ENCODE measurements at regions of chr15 and their contacts with region 1.

Region 1: GRCh38 chr15:63402498-63403253 is 21.0 kb upstream of the CA12 start:
- DNase-seq: no peak
- H3K4me3 ChIP-seq: no peak overlapping the region
- H3K27ac ChIP-seq: no peak overlapping the region
- H3K4me1 ChIP-seq: peaks cover 0 to 5% (median 0%) of the 10 kb centered on the region in 4 donors
- H3K27me3 ChIP-seq: no peaks in the 10 kb centered on the region
- CTCF ChIP-seq: peak; percentile 65 to 70

Region 2: DNA sequence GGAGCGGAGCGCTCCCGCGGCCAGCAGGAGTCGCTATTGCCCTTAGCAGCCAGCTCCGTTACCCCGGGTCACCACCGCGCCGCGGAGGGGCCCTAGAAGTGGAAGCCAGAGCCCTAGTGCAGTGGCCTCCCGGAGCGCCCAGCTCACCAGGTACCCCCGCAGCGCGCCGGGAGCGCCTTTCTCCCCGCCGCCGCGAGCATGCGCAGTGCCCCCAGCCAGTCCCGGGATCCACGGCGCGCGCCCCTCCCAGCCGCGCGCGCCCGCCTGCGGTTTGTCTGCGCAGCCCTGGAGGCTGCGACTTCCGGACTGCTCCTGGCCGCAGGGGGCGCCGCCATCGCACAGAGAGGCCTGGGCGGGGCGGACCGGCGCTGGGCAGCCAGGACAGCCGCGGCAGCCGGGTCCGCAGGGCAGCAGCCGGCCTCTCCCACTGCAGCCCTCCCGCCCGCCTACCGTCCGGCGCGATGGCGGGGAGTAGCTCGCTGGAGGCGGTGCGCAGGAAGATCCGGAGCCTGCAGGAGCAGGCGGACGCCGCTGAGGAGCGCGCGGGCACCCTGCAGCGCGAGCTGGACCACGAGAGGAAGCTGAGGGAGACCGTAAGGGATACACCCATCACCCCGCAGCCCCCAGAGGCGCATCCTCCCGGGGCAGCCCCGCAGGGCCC is 354.4 kb before region 1 on chr15:
- intact Hi-C with region 1: loop called (anchors 5 kb)
- DNase-seq: peak; percentile 90 to 95
- H3K4me3 ChIP-seq: peak overlapping the region; percentile 90 to 95
- H3K27ac ChIP-seq: peak overlapping the region; percentile 93 to 97
- H3K4me1 ChIP-seq: peaks cover 0 to 65% (median 49%) of the 10 kb centered on the region in 4 donors
- H3K27me3 ChIP-seq: no peaks in the 10 kb centered on the region
- CTCF ChIP-seq: peak; percentile 94

Region 3: GRCh38 chr15:63291507-63291906 is 111.2 kb before region 1 on chr15:
- intact Hi-C with region 1: loop called (anchors 5 kb)
- DNase-seq: no peak
- H3K4me3 ChIP-seq: no peak overlapping the region
- H3K27ac ChIP-seq: peak overlapping the region; percentile 57 to 70
- H3K4me1 ChIP-seq: peaks cover 0 to 29% (median 15%) of the 10 kb centered on the region in 4 donors
- H3K27me3 ChIP-seq: no peaks in the 10 kb centered on the region
- CTCF ChIP-seq: peak in 1 of 2 experiments; percentile 10

Region 4: GRCh38 chr15:63430766-63431449 is 28.2 kb after region 1 on chr15:
- intact Hi-C with region 1: no loop called
- DNase-seq: no peak
- H3K4me3 ChIP-seq: no peak overlapping the region
- H3K27ac ChIP-seq: no peak overlapping the region
- H3K4me1 ChIP-seq: peaks cover 0 to 5% (median 0%) of the 10 kb centered on the region in 4 donors
- H3K27me3 ChIP-seq: no peaks in the 10 kb centered on the region
- CTCF ChIP-seq: no peak

Measured in tibial artery (tissue), 4 donors.